Activated CD8-positive, alpha-beta T cell treated with anti-CD3 and anti-CD28 coated beads, Interleukin-2, amount 10 ng/mL, durations not matched to agents 7 days and 5 days (primary cell): ENCODE measurements at regions of chr20 and their contacts with region 1.

Region 1: GRCh38 chr20:4592316-4593148 is 129.2 kb upstream of the PRND start:
- DNase-seq: peak; percentile 57
- ATAC-seq: peak; percentile 86
- H3K4me3 Mint-ChIP-seq: peak overlapping the region; percentile 66
- H3K27ac Mint-ChIP-seq: no peak overlapping the region
- H3K4me1 Mint-ChIP-seq: peaks cover 13% of the 10 kb centered on the region
- H3K27me3 Mint-ChIP-seq: peaks cover 26% of the 10 kb centered on the region

Region 2: DNA sequence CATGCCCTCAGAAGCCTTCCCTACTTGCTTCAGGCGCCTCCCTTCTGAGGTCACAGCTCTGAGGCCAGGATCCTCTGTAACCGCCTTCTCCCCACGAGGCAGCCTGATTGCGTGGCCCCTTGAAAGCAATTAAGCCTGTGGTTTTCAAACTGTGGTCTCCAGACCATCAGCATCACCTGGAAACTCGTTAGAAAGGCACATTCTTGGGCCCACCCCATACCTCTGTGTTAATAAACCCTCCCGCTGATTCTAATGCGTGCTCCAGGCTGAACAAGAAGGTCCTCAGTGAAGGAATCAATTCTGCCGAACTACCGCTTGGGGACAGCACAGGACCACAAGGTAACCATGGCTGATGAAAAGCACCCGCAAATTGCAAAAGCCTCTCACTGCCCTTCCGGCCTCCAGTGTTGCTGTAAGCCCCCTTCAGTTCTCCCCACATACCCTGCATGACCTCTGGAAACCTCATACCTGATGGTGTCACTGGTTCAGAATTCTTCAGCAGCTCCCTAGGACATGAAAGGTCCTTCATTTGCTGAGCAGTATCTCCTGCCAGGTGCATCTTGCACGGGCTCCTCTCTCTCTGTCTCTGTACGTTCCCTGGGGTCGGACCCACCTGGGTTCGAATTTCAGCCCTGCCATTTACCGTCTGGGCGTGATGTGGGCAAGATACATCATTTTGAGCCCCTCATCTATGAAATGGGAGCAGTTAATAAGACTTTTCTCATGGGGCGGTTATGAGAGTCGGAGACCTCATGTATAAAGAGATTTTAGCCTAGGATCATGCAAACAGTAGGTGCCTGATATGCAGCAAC is 483.8 kb before region 1 on chr20:
- CTCF ChIA-PET with region 1: interaction called, 10 read pairs
- POLR2A ChIA-PET with region 1: no interaction called
- DNase-seq: peak; percentile 83
- ATAC-seq: peak; percentile 86
- H3K4me3 Mint-ChIP-seq: no peak overlapping the region
- H3K27ac Mint-ChIP-seq: peak overlapping the region; percentile 61
- H3K4me1 Mint-ChIP-seq: peaks cover 21% of the 10 kb centered on the region
- H3K27me3 Mint-ChIP-seq: no peaks in the 10 kb centered on the region

Region 3: GRCh38 chr20:4613718-4614620 is 21.4 kb after region 1 on chr20:
- CTCF ChIA-PET with region 1: no interaction called
- POLR2A ChIA-PET with region 1: no interaction called
- DNase-seq: peak; percentile 83
- ATAC-seq: peak; percentile 87
- H3K4me3 Mint-ChIP-seq: no peak overlapping the region
- H3K27ac Mint-ChIP-seq: no peak overlapping the region
- H3K4me1 Mint-ChIP-seq: peaks cover 8% of the 10 kb centered on the region
- H3K27me3 Mint-ChIP-seq: peaks cover 10% of the 10 kb centered on the region

Region 4: GRCh38 chr20:4645646-4646045 is 53.1 kb after region 1 on chr20:
- CTCF ChIA-PET with region 1: no interaction called
- POLR2A ChIA-PET with region 1: no interaction called
- DNase-seq: no peak
- ATAC-seq: no peak
- H3K4me3 Mint-ChIP-seq: no peak overlapping the region
- H3K27ac Mint-ChIP-seq: no peak overlapping the region
- H3K4me1 Mint-ChIP-seq: no peaks in the 10 kb centered on the region
- H3K27me3 Mint-ChIP-seq: peaks cover 19% of the 10 kb centered on the region